ENCODE measurements at regions of chr3 and their contacts with region 1.

Region 1: GRCh38 chr3:154971771-154972326 is 108.3 kb upstream of the MME start:
- DNase-seq: peak in 2 of 3 donors; percentile 23 to 49
- H3K4me3 ChIP-seq: peak overlapping the region in 1 of 3 experiments; percentile 45
- H3K4me3 Mint-ChIP-seq: peak overlapping the region in 1 of 2 donors; percentile 67
- H3K27ac ChIP-seq: peak overlapping the region in 1 of 2 donors; percentile 82
- H3K27ac Mint-ChIP-seq: peak overlapping the region; percentile 75 to 95 (median 94)
- H3K4me1 ChIP-seq: peaks cover 22 to 24% of the 10 kb centered on the region in 2 donors
- H3K4me1 Mint-ChIP-seq: peaks cover 23% of the 10 kb centered on the region
- H3K27me3 ChIP-seq: no peaks in the 10 kb centered on the region
- H3K27me3 Mint-ChIP-seq: no peaks in the 10 kb centered on the region
- CTCF ChIP-seq: no peak

Region 2: DNA sequence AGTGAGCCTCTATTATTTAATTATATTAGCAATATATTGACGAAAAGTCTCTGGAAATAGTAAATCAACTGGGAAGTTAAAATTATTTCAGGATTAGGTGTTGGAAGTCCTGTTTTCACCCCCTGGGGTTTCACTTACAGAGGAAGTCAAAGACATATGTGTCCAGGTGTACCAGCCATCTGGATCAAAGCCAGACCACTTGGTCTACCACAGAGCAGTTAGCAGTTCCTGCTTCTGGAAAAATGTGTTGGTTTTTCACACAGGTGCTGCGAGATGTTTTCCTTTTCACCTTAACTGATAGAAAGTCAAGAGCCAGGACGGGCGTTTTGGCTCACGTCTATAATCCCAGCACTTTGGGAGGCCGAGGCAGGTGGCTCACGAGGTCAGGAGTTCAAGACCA is 121.4 kb after region 1 on chr3:
- intact Hi-C with region 1: loop called in 1 of 2 experiments (anchors 10 kb)
- DNase-seq: no peak
- H3K4me3 ChIP-seq: no peak overlapping the region
- H3K4me3 Mint-ChIP-seq: no peak overlapping the region
- H3K27ac ChIP-seq: no peak overlapping the region
- H3K27ac Mint-ChIP-seq: no peak overlapping the region
- H3K4me1 ChIP-seq: peaks cover 13% of the 10 kb centered on the region in 2 donors
- H3K4me1 Mint-ChIP-seq: peaks cover 7% of the 10 kb centered on the region
- H3K27me3 ChIP-seq: no peaks in the 10 kb centered on the region
- H3K27me3 Mint-ChIP-seq: no peaks in the 10 kb centered on the region
- CTCF ChIP-seq: no peak

Measured in CD14-positive monocyte (primary cell).